HEK293 (cell line): ENCODE measurements at regions of chr6 and their contacts with region 1.

Region 1: GRCh38 chr6:151335930-151336329 is 55.4 kb downstream of the ZBTB2 start:
- H3K4me3 ChIP-seq: no peak overlapping the region
- H3K27ac ChIP-seq: no peak overlapping the region
- H3K4me1 ChIP-seq: no peaks in the 10 kb centered on the region
- CTCF ChIP-seq: no peak

Region 2: DNA sequence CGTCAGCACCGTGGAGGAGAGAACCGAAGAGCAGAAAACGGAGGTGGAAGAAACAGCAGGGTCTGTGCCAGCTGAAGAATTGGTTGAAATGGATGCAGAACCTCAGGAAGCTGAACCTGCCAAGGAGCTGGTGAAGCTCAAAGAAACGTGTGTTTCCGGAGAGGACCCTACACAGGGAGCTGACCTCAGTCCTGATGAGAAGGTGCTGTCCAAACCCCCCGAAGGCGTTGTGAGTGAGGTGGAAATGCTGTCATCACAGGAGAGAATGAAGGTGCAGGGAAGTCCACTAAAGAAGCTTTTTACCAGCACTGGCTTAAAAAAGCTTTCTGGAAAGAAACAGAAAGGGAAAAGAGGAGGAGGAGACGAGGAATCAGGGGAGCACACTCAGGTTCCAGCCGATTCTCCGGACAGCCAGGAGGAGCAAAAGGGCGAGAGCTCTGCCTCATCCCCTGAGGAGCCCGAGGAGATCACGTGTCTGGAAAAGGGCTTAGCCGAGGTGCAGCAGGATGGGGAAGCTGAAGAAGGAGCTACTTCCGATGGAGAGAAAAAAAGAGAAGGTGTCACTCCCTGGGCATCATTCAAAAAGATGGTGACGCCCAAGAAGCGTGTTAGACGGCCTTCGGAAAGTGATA is 13.8 kb after region 1 on chr6:
- CTCF ChIA-PET with region 1: interaction called, 14 read pairs
- POLR2A ChIA-PET with region 1: interaction called, 3 read pairs
- H3K4me3 ChIP-seq: no peak overlapping the region
- H3K27ac ChIP-seq: no peak overlapping the region
- H3K4me1 ChIP-seq: no peaks in the 10 kb centered on the region
- CTCF ChIP-seq: no peak

Region 3: GRCh38 chr6:151413372-151414145 is 77.6 kb after region 1 on chr6:
- CTCF ChIA-PET with region 1: no interaction called
- POLR2A ChIA-PET with region 1: no interaction called
- H3K4me3 ChIP-seq: no peak overlapping the region
- H3K27ac ChIP-seq: no peak overlapping the region
- H3K4me1 ChIP-seq: no peaks in the 10 kb centered on the region
- CTCF ChIP-seq: no peak